Vagina (tissue), 2 donors: ENCODE measurements at regions of chr7 and their contacts with region 1.

Region 1: DNA sequence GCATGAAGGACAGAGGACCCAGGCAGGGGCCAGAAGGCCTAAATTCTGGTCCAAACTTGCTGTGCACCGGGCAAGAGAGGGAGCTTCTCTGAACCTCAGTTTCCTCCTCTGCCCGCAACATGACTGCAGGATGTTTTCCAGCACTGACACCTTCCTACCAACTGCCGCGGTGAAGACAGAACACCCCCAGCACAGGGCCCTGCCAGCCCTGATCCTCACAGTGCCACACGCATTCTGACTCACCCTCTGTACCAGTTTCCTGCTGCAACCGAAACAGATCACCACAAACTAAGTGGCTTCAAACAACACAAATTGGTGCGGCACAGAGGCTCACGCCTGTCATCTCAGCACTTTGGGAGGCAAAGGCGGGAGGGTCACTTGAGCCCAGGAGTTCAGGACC is 18.1 kb downstream of the MAD1L1 start:
- DNase-seq: no peak
- H3K4me3 ChIP-seq: no peak overlapping the region
- H3K27ac ChIP-seq: no peak overlapping the region
- H3K4me1 ChIP-seq: no peaks in the 10 kb centered on the region
- H3K27me3 ChIP-seq: no peaks in the 10 kb centered on the region
- CTCF ChIP-seq: no peak
- POLR2A ChIP-seq: no peak

Region 2: DNA sequence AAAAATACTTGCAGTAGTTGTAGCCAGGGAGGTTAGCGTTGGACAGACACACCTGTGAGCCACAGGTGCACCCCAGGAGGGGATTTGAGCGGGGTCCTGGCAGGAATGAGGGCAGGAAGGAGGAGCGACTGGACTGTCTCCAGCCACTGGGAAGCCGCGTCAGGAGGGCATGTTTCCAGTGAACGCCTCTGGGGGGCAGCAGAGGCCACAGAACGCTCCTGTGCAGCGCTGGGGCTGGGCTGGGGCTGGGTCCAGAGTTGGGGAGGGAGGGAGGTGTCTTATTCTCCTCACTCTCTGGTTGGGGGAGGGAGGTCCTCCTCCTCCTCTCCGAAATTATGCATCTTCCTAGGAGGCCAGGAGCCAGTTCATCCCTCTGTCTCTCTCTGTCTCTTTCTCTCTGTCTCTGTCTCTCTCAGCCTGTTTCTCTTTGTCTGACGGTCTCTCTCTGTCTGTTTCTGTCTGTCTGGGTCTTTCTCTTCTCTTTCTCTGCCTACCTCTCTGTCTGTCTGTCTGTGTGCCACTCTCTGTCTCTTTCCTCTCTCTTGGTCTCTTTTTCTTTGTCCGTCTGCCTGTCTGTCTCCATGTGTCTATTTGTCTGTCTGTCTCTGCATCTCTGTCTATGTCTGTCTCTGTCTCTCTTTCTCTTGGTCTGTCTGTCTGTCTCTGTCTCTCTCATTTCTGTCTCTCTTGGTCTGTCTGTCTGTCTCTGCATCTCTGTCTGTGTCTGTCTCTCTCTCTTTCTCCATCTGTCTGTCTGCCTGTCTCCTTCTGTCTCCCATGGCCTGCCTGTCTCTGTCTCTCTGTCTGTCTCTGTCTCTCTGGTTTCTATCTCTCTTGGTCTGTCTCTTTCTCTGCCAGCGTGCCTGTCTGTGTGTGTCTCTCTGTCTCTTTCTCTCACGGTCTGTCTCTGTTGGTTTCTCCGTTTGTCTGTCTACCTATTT is 634.9 kb before region 1 on chr7:
- intact Hi-C with region 1: loop called (anchors 10 kb)
- DNase-seq: no peak
- H3K4me3 ChIP-seq: no peak overlapping the region
- H3K27ac ChIP-seq: no peak overlapping the region
- H3K4me1 ChIP-seq: peaks cover 8% of the 10 kb centered on the region
- H3K27me3 ChIP-seq: no peaks in the 10 kb centered on the region
- CTCF ChIP-seq: peak; percentile 67 to 83 (median 73)
- POLR2A ChIP-seq: no peak